Panc1 (cell line): ENCODE measurements at regions of chr12 and their contacts with region 1.

Region 1: DNA sequence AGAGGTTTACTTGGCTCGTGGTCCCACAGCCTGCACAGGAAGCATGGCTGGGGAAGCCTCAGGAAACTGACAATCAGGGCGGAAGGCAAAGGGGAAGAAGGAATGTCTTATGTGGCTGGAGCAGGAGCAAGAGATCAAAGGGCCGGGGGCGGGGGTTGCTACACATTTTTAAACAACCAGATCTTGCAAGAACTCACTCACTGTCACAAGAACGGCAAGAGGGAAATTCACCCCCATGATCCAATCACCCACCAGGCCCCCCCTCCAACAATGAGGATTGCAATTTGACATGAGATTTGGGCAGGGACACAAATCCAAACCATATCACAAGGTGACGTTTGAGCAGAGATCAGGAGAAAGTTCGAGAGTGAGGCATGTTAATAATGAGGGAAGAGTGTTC is 163.7 kb upstream of the RPH3A start:
- DNase-seq: no peak
- ATAC-seq: no peak
- H3K4me3 ChIP-seq: no peak overlapping the region
- H3K27ac ChIP-seq: no peak overlapping the region
- H3K4me1 ChIP-seq: no peaks in the 10 kb centered on the region
- H3K27me3 ChIP-seq: no peaks in the 10 kb centered on the region
- CTCF ChIP-seq: no peak

Region 2: DNA sequence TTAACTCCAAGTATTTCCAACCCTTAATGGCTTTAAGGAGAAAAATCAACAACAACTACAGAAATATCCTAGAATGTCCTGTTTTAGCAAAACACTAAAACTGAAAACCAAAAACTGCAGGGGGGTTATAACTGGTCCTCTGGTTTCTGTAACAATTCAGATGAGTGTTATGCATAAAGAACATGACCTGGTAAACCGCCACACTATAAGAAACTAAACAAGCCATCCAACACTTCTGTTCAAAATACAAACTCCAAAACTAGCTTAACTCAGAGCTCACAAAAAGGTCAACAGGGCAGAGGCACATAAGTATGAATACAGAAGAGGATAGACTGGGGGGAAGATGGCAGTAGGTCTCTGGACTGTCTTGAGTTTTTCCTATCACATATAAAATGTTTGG is 283.6 kb before region 1 on chr12:
- CTCF ChIA-PET with region 1: interaction called, 11 read pairs
- POLR2A ChIA-PET with region 1: no interaction called
- in situ Hi-C with region 1: no loop called
- intact Hi-C with region 1: no loop called
- DNase-seq: no peak
- ATAC-seq: no peak
- H3K4me3 ChIP-seq: no peak overlapping the region
- H3K27ac ChIP-seq: no peak overlapping the region
- H3K4me1 ChIP-seq: peaks cover 27% of the 10 kb centered on the region
- H3K27me3 ChIP-seq: no peaks in the 10 kb centered on the region
- CTCF ChIP-seq: no peak

Region 3: GRCh38 chr12:112496496-112496895 is 131.4 kb before region 1 on chr12:
- CTCF ChIA-PET with region 1: no interaction called
- POLR2A ChIA-PET with region 1: no interaction called
- in situ Hi-C with region 1: no loop called
- intact Hi-C with region 1: no loop called
- DNase-seq: no peak
- ATAC-seq: no peak
- H3K4me3 ChIP-seq: no peak overlapping the region
- H3K27ac ChIP-seq: no peak overlapping the region
- H3K4me1 ChIP-seq: no peaks in the 10 kb centered on the region
- H3K27me3 ChIP-seq: no peaks in the 10 kb centered on the region
- CTCF ChIP-seq: no peak

Region 4: DNA sequence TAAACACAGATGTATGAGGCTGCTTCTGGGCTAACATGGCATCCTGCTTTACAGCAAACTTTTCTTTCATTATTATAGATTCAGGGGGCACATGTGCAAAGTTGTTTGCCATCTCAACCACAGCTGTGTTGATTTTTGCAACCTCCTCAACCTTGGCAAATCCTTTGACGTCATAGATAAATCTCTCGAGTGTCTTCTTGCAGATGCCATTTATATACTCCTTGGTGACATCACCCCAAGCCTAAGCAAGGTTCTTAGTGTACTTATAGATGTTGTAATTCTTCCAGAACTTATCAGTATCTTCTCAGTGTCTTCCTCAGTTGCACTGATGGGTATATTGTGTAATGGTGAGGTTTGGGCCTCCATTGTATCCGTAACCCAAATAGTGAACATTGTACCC is 28.3 kb after region 1 on chr12:
- CTCF ChIA-PET with region 1: no interaction called
- POLR2A ChIA-PET with region 1: no interaction called
- in situ Hi-C with region 1: no loop called
- intact Hi-C with region 1: no loop called
- DNase-seq: no peak
- ATAC-seq: no peak
- H3K4me3 ChIP-seq: no peak overlapping the region
- H3K27ac ChIP-seq: no peak overlapping the region
- H3K4me1 ChIP-seq: no peaks in the 10 kb centered on the region
- H3K27me3 ChIP-seq: no peaks in the 10 kb centered on the region; the same call in none of the 2 replicates
- CTCF ChIP-seq: no peak